ENCODE measurements at regions of chr22 and their contacts with region 1.

Region 1: DNA sequence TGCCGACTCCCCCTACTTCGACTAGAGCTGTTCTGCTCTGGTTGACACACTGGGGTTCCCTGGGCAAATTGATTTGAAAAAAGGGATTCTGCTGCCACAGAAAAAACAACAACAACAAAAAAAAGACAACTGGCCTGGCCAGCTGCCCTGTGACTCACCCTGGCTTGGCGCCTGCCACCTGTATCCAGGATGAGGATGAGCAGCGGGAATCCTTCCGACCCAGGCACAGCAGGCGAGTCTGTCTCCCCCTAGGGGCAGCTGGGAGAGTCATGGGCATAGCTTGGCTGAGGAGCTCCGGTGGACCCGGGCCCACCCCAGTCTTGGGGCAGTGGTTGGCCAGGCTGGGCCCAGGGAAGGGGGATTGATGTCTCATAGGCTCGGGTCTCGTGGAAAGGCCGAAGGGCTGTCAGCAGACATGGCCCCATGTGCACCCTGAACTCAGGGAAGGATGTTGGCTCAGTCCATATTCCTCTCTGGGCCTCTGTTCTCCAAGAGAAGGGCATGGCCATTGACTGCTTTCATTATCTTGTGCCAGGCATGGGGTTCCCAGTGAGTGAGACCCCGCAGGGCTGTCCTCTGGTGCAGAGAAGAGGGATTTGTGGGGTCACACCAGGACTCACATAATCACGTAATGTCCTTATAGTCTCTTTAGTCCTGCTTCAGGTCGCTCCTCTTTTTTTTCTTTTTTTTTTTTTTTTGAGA is 10.4 kb upstream of the SUN2 start:
- DNase-seq: no peak
- ATAC-seq: peak; percentile 75
- H3K4me3 ChIP-seq: no peak overlapping the region
- H3K27ac ChIP-seq: no peak overlapping the region
- H3K4me1 ChIP-seq: peaks cover 2% of the 10 kb centered on the region; the same call in 1 of the 2 replicates
- H3K27me3 ChIP-seq: no peaks in the 10 kb centered on the region; a peak in 1 of 4 replicates
- CTCF ChIP-seq: peak; percentile 70 to 86 (median 71)
- EP300 ChIP-seq: no peak
- POLR2A ChIP-seq: no peak
- RAD21 ChIP-seq: no peak

Region 2: DNA sequence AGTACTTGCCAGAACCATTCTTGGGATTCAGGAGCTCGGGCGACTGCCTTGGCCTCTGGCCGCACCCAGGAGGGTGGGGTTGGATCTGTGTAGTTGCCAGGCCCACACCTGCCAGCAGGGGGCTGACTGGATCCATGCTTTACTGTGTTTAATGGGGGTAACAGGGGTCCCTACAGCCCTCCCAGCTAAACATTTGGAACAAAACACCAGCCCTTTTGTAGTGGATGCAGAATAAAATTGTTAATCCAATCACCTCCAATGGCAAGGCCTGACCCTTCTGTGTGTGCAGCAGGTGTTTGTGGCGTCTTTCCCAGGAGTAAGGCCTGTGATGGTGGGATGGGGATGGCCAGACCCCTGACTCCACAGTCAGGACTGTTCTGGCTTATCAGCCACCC is 32.9 kb before region 1 on chr22:
- CTCF ChIA-PET with region 1: interaction called, 26 read pairs
- POLR2A ChIA-PET with region 1: no interaction called
- RAD21 ChIA-PET with region 1: interaction called, 4 read pairs
- SMC1A ChIA-PET with region 1: no interaction called
- in situ Hi-C with region 1: no loop called
- intact Hi-C with region 1: no loop called
- DNase-seq: no peak
- ATAC-seq: peak; percentile 78
- H3K4me3 ChIP-seq: no peak overlapping the region
- H3K27ac ChIP-seq: no peak overlapping the region
- H3K4me1 ChIP-seq: no peaks in the 10 kb centered on the region
- H3K27me3 ChIP-seq: no peaks in the 10 kb centered on the region
- CTCF ChIP-seq: peak; percentile 74 to 86 (median 77)
- EP300 ChIP-seq: no peak
- POLR2A ChIP-seq: peak; percentile 53
- RAD21 ChIP-seq: peak; percentile 50; the same call in 1 of the 2 replicates

Region 3: GRCh38 chr22:38745676-38746460 is 20.4 kb before region 1 on chr22:
- CTCF ChIA-PET with region 1: interaction called, 16 read pairs
- POLR2A ChIA-PET with region 1: no interaction called
- RAD21 ChIA-PET with region 1: no interaction called
- SMC1A ChIA-PET with region 1: no interaction called
- in situ Hi-C with region 1: no loop called
- intact Hi-C with region 1: no loop called
- DNase-seq: no peak
- ATAC-seq: no peak
- H3K4me3 ChIP-seq: no peak overlapping the region
- H3K27ac ChIP-seq: no peak overlapping the region
- H3K4me1 ChIP-seq: peaks cover 3% of the 10 kb centered on the region
- H3K27me3 ChIP-seq: no peaks in the 10 kb centered on the region
- CTCF ChIP-seq: no peak
- EP300 ChIP-seq: no peak
- POLR2A ChIP-seq: no peak
- RAD21 ChIP-seq: no peak

Region 4: DNA sequence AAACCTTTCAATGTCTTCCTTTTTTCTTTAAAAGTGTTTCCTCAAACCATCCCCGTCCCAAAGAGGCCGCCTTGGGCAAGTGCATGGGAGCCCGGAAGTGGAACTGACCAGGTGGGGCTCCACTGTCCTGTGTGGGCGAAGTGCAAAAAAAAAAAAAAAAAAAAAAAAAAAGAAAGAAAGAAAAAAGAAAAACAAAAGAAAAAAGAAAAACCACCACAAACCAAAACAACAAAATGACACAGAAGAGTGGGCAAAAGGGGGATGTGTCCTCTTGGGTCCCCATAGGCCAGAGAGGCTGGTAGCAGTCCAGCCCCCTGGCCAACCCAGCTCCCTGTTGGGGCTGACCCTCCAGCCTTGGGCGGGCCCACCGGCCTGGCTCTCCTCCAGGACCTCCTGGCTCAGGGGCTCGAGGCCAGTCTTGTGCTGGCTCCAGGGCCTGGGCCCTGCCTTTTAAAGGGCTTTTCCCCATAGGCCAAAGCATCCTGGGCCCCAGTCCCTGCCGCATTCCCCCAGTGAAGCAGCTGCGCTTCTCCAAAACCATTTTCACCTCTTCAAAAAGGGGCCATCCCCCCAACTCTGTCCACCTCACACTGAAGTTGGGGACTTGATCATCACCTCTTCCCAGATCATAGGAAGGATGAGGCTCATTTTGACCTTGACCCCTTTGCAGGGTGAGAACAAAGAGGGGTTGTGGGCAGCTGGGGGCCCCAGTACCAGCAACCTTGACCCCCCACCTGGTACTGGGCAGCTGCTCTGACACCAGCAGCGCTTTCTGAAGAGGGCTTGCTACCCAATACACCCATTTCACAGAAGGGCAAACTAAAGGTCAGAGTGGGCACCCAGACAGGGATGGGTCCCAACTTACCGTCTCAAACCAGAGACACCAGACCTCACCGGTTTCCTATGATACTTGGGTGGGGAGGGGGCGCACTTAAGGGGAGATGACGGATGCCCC is 96.4 kb after region 1 on chr22:
- CTCF ChIA-PET with region 1: interaction called, 33 read pairs
- POLR2A ChIA-PET with region 1: no interaction called
- RAD21 ChIA-PET with region 1: no interaction called
- SMC1A ChIA-PET with region 1: no interaction called
- in situ Hi-C with region 1: no loop called
- intact Hi-C with region 1: loop called (anchors 5 kb)
- DNase-seq: no peak
- ATAC-seq: peak; percentile 32
- H3K4me3 ChIP-seq: no peak overlapping the region
- H3K27ac ChIP-seq: no peak overlapping the region
- H3K4me1 ChIP-seq: no peaks in the 10 kb centered on the region
- H3K27me3 ChIP-seq: no peaks in the 10 kb centered on the region
- CTCF ChIP-seq: no peak
- EP300 ChIP-seq: no peak
- POLR2A ChIP-seq: peak; percentile 26
- RAD21 ChIP-seq: no peak

Region 5: GRCh38 chr22:39123751-39124601 is 357.7 kb after region 1 on chr22:
- CTCF ChIA-PET with region 1: interaction called, 4 read pairs
- POLR2A ChIA-PET with region 1: interaction called, 3 read pairs
- RAD21 ChIA-PET with region 1: interaction called, 5 read pairs
- SMC1A ChIA-PET with region 1: no interaction called
- in situ Hi-C with region 1: loop called (anchors 10 kb)
- intact Hi-C with region 1: loop called (anchors 10 kb)
- DNase-seq: no peak
- ATAC-seq: no peak
- H3K4me3 ChIP-seq: no peak overlapping the region
- H3K27ac ChIP-seq: no peak overlapping the region
- H3K4me1 ChIP-seq: no peaks in the 10 kb centered on the region
- H3K27me3 ChIP-seq: no peaks in the 10 kb centered on the region
- CTCF ChIP-seq: no peak
- EP300 ChIP-seq: no peak
- POLR2A ChIP-seq: no peak
- RAD21 ChIP-seq: no peak